Heart left ventricle (tissue), 16 donors: ENCODE measurements at regions of chr1 and their contacts with region 1.

Region 1: GRCh38 chr1:47587891-47588582 is 150.2 kb downstream of the FOXD2 start:
- DNase-seq: peak in 4 of 5 donors; percentile 52 to 69 (median 60)
- ATAC-seq: peak; percentile 73 to 90 (median 78)
- H3K4me3 ChIP-seq: no peak overlapping the region
- H3K27ac ChIP-seq: peak overlapping the region in 7 of 12 donors; percentile 5 to 62 (median 47)
- H3K4me1 ChIP-seq: peaks cover 3 to 47% (median 20%) of the 10 kb centered on the region in 12 donors
- H3K27me3 ChIP-seq: peaks cover 0 to 22% (median 5%) of the 10 kb centered on the region in 9 donors
- CTCF ChIP-seq: no peak
- POLR2A ChIP-seq: no peak

Region 2: GRCh38 chr1:47532921-47533792 is 54.9 kb before region 1 on chr1:
- intact Hi-C with region 1: loop called in 1 of 10 experiments (anchors 2 kb)
- DNase-seq: peak; percentile 66 to 79 (median 73)
- ATAC-seq: peak; percentile 55 to 90 (median 82)
- H3K4me3 ChIP-seq: peak overlapping the region in 11 of 12 donors; percentile 12 to 63 (median 51)
- H3K27ac ChIP-seq: peak overlapping the region in 7 of 12 donors; percentile 26 to 58 (median 41)
- H3K4me1 ChIP-seq: peaks cover 0 to 32% (median 11%) of the 10 kb centered on the region in 12 donors
- H3K27me3 ChIP-seq: peaks cover 0 to 16% (median 0%) of the 10 kb centered on the region in 9 donors
- CTCF ChIP-seq: no peak
- POLR2A ChIP-seq: no peak

Region 3: GRCh38 chr1:47627471-47628370 is 39.7 kb after region 1 on chr1:
- intact Hi-C with region 1: no loop called
- DNase-seq: peak in 1 of 5 donors; percentile 7
- ATAC-seq: no peak
- H3K4me3 ChIP-seq: no peak overlapping the region
- H3K27ac ChIP-seq: no peak overlapping the region
- H3K4me1 ChIP-seq: no peaks in the 10 kb centered on the region
- H3K27me3 ChIP-seq: peaks cover 0 to 29% (median 0%) of the 10 kb centered on the region in 9 donors
- CTCF ChIP-seq: no peak
- POLR2A ChIP-seq: no peak

Region 4: DNA sequence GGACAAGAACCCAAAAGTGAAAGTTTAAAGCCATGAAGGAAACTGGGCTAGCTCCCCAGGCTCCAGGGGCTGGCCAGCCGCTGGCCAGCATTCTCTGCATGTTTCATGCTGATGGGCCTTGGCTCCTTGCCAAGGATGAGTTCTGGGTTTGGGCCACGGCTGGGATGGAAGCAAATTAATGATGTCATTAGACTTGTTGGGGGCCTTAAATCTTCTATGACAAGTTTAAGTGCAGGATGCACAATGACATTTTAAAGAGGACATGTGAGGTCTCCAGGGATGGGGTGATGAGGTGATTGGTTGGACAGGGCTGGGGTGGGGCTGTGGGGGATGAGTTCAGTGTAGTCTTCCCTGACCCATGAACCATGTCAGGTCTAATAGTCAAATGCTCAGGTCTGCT is 209.5 kb after region 1 on chr1:
- intact Hi-C with region 1: no loop called
- DNase-seq: peak in 1 of 5 donors; percentile 47
- ATAC-seq: peak in 1 of 4 donors; percentile 8
- H3K4me3 ChIP-seq: no peak overlapping the region
- H3K27ac ChIP-seq: no peak overlapping the region
- H3K4me1 ChIP-seq: peaks cover 0 to 6% (median 0%) of the 10 kb centered on the region in 12 donors
- H3K27me3 ChIP-seq: no peaks in the 10 kb centered on the region
- CTCF ChIP-seq: no peak
- POLR2A ChIP-seq: no peak